Right ventricle myocardium superior (tissue), 1 donor: ENCODE measurements at regions of chr4 and their contacts with region 1.

Region 1: DNA sequence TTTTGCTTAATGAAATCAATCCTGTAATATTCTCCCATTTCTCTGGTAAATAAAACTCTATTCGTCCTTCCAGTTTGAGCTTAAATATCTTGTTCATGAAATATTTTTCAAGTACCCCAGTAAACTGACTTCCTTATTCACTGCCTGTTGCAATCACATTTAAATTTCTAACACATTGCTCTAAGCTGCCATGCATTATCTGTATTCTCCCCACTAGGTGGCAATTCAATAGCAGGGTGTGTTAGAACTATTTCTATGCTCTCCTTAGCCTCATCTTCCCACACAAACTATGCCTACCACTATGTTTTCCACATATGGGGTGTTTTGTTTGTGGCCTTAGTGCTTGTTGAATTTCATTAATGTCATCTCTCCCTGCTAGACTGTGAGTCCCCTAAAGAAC is 377.1 kb upstream of the HS3ST1 start:
- DNase-seq: no peak
- ATAC-seq: peak; percentile 79

Region 2: DNA sequence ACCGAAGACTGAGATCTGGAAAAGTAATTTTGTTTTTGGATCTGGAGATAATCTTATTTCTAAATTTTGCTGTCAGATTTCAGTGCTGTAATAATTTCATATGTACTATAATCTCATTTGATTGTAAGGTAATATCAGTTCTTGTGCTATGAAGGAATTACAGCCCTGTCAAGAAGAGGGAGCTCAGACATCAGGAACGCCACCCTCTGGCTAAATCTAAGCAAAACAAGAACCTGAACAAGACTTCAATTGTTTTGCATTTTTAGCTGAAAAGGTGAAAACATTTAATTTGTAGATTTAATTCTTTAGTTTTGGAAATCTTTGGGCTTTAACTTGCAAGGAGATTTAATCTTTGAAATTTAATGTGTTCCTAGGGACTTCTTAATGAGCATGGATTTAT is 148.3 kb after region 1 on chr4:
- intact Hi-C with region 1: loop called (anchors 5 kb)
- DNase-seq: no peak
- ATAC-seq: no peak